Psoas muscle (tissue), 8 donors: ENCODE measurements at regions of chr10 and their contacts with region 1.

Region 1: GRCh38 chr10:24292304-24293293 is 83.7 kb downstream of the KIAA1217 start:
- DNase-seq: peak in 1 of 2 donors; percentile 79
- ATAC-seq: peak; percentile 12 to 47 (median 20)
- H3K4me3 ChIP-seq: no peak overlapping the region
- H3K27ac ChIP-seq: peak overlapping the region; percentile 82
- H3K4me1 ChIP-seq: peaks cover 30% of the 10 kb centered on the region
- H3K27me3 ChIP-seq: no peaks in the 10 kb centered on the region
- CTCF ChIP-seq: no peak

Region 2: DNA sequence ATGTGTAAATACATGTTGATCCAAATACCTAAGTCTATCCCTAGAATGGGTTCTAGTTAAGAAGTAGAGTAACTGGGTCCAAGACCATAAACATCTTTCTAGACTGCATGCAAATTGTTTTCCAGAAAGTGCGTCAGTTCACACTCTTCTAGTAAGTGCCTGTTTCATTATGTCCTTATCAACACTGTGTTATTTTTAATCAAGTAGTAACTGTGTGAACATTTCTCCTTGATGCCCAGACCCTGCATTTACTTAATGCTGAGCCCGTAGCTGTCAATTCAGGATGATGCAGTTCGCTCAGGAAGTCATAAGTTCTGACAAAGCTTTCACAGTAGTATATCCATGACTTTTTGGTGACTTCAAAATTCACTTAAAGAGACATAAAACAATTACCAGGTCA is 478.9 kb before region 1 on chr10:
- intact Hi-C with region 1: no loop called
- DNase-seq: no peak
- ATAC-seq: no peak
- H3K4me3 ChIP-seq: no peak overlapping the region
- H3K27ac ChIP-seq: no peak overlapping the region
- H3K4me1 ChIP-seq: no peaks in the 10 kb centered on the region
- H3K27me3 ChIP-seq: no peaks in the 10 kb centered on the region
- CTCF ChIP-seq: no peak

Region 3: DNA sequence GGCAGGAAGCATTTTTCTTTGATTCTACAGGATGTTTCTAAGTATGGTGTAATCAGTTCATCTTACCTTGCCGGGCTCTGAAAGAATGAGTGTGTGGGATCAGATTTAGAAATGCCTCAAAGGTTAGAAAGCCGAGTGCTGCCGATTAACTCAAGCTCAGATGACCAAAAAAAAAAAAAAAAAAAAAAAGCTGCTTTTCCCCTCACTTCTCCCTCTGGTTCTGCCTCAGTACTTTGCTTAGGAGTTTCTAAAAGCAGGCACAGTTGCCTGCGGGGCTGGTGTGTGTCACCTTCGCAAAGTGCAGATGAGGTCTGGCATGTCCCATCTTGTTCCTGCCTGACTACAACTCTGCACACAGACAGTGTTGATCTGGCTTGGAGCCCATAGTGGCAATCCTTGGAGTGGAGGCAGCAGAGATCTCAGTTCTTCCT is 36.7 kb before region 1 on chr10:
- intact Hi-C with region 1: no loop called
- DNase-seq: peak; percentile 57 to 78
- ATAC-seq: peak; percentile 69 to 86 (median 74)
- H3K4me3 ChIP-seq: peak overlapping the region; percentile 44
- H3K27ac ChIP-seq: peak overlapping the region; percentile 87
- H3K4me1 ChIP-seq: peaks cover 82% of the 10 kb centered on the region
- H3K27me3 ChIP-seq: no peaks in the 10 kb centered on the region
- CTCF ChIP-seq: no peak

Region 4: DNA sequence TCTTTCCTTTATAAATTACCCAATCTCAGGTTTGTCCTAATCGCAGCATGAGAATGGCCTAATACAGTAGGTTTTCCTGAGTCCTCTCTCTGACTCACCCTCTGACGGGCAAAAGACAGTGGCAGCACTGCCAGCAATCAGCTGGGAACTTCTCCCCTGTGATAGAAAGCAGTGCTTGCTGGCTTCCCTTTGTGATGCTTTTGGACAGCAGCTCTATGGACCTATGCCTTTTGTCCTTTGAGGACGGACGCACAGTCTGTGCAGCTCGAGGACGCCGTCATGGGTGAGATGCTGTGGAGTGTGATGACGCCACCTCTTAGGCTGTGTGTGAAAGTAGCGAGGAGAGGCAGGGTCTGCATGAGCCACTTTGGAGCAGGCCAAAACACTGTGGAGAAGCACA is 14.8 kb before region 1 on chr10:
- intact Hi-C with region 1: loop called in 1 of 2 experiments (anchors 2 kb)
- DNase-seq: peak in 1 of 2 donors; percentile 71
- ATAC-seq: peak; percentile 74 to 90 (median 86)
- H3K4me3 ChIP-seq: no peak overlapping the region
- H3K27ac ChIP-seq: peak overlapping the region; percentile 76
- H3K4me1 ChIP-seq: peaks cover 21% of the 10 kb centered on the region
- H3K27me3 ChIP-seq: no peaks in the 10 kb centered on the region
- CTCF ChIP-seq: no peak